IMR-90 (cell line): ENCODE measurements at regions of chr10 and their contacts with region 1.

Region 1: GRCh38 chr10:48429309-48429708 is 122.8 kb downstream of the MAPK8 start:
- DNase-seq: no peak
- ATAC-seq: no peak
- H3K4me3 ChIP-seq: no peak overlapping the region
- H3K27ac ChIP-seq: no peak overlapping the region
- H3K4me1 ChIP-seq: no peaks in the 10 kb centered on the region
- H3K27me3 ChIP-seq: no peaks in the 10 kb centered on the region
- CTCF ChIP-seq: no peak
- POLR2A ChIP-seq: no peak
- RAD21 ChIP-seq: no peak

Region 2: DNA sequence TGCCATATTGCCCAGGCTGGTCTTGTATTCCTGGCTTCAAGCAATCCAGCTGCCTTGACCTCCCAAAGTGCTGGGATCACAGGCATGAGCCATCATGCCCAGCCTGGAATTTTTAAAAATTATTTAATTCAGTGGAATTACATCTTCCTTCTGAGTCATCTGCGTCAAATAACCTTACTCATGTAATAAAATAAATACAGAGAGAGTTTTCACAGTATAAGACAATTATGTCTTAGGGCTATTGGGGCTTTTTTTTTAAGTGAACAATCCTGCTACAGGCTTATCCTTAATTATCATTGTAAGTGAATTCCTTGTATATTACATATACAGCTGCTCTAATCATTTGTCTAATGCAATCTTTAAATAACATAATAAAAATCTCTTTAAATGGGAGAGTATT is 14.5 kb before region 1 on chr10:
- CTCF ChIA-PET with region 1: no interaction called
- POLR2A ChIA-PET with region 1: no interaction called
- dilution Hi-C with region 1: no loop called
- in situ Hi-C with region 1: no loop called
- intact Hi-C with region 1: loop called (anchors 2 kb)
- DNase-seq: peak; percentile 82
- ATAC-seq: peak; percentile 85
- H3K4me3 ChIP-seq: no peak overlapping the region
- H3K27ac ChIP-seq: peak overlapping the region; percentile 28; the same call in 1 of the 2 replicates
- H3K4me1 ChIP-seq: peaks cover 9% of the 10 kb centered on the region
- H3K27me3 ChIP-seq: no peaks in the 10 kb centered on the region
- CTCF ChIP-seq: no peak
- POLR2A ChIP-seq: no peak
- RAD21 ChIP-seq: no peak